ENCODE measurements at regions of chr5 and their contacts with region 1.

Region 1: GRCh38 chr5:73454351-73455036 is 5.9 kb upstream of the FOXD1 start:
- DNase-seq: peak; percentile 52
- H3K4me3 ChIP-seq: peak overlapping the region in 1 of 2 experiments; percentile 22; a peak in 1 of 4 replicates
- H3K27ac ChIP-seq: no peak overlapping the region
- H3K4me1 ChIP-seq: peaks cover 5 to 7% of the 10 kb centered on the region in 2 experiments; a peak in 1 of 4 replicates
- H3K27me3 ChIP-seq: no peaks in the 10 kb centered on the region
- CTCF ChIP-seq: peak; percentile 81
- EP300 ChIP-seq: no peak
- RAD21 ChIP-seq: peak; percentile 49

Region 2: GRCh38 chr5:73303148-73304079 is 151.1 kb before region 1 on chr5:
- CTCF ChIA-PET with region 1: interaction called, 12 read pairs
- POLR2A ChIA-PET with region 1: no interaction called
- DNase-seq: peak; percentile 49
- H3K4me3 ChIP-seq: no peak overlapping the region
- H3K27ac ChIP-seq: no peak overlapping the region
- H3K4me1 ChIP-seq: no peaks in the 10 kb centered on the region; a peak in 1 of 4 replicates
- H3K27me3 ChIP-seq: no peaks in the 10 kb centered on the region
- CTCF ChIP-seq: peak; percentile 18; the same call in 1 of the 2 replicates
- EP300 ChIP-seq: no peak
- RAD21 ChIP-seq: no peak

Region 3: DNA sequence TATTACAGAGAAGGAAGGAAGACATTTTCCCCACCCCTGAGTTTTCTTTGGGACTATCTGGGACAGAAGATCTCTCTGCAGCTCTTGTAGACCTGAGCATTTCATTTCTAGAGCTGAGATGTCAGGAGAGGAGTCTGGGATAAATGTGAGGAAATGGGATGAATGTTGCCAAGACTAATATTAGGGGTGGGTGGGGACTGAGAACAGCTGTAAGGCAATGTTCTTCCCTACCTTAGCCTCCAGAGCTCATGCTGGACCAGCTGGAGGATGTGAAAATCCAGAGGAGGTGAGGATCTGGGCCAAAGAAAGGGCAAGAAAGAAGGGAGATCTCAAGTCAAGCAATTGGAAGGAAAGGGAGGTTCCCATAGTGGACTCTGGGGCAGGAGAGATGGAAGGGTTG is 17.2 kb after region 1 on chr5:
- CTCF ChIA-PET with region 1: interaction called, 10 read pairs
- POLR2A ChIA-PET with region 1: no interaction called
- DNase-seq: no peak
- H3K4me3 ChIP-seq: no peak overlapping the region
- H3K27ac ChIP-seq: no peak overlapping the region
- H3K4me1 ChIP-seq: no peaks in the 10 kb centered on the region
- H3K27me3 ChIP-seq: no peaks in the 10 kb centered on the region
- CTCF ChIP-seq: no peak
- EP300 ChIP-seq: no peak
- RAD21 ChIP-seq: no peak

Region 4: GRCh38 chr5:73498057-73499008 is 43.8 kb after region 1 on chr5 and contains the start of gene BTF3:
- CTCF ChIA-PET with region 1: interaction called, 13 read pairs
- POLR2A ChIA-PET with region 1: interaction called, 3 read pairs
- DNase-seq: peak; percentile 91
- H3K4me3 ChIP-seq: peak within 1 kb of the TSS; percentile 88 to 98
- H3K27ac ChIP-seq: peak within 1 kb of the TSS; percentile 95 to 99
- H3K4me1 ChIP-seq: peaks cover 11 to 16% of the 10 kb centered on the region in 2 experiments; a peak in 3 of 4 replicates
- H3K27me3 ChIP-seq: no peaks in the 10 kb centered on the region
- CTCF ChIP-seq: no peak
- EP300 ChIP-seq: no peak
- RAD21 ChIP-seq: no peak
- polyA plus RNA-seq, gene BTF3: 458 and 492 TPM in 2 replicates

Region 5: GRCh38 chr5:73540192-73540591 is 85.7 kb after region 1 on chr5:
- CTCF ChIA-PET with region 1: interaction called, 10 read pairs
- POLR2A ChIA-PET with region 1: no interaction called
- DNase-seq: no peak
- H3K4me3 ChIP-seq: no peak overlapping the region
- H3K27ac ChIP-seq: no peak overlapping the region
- H3K4me1 ChIP-seq: no peaks in the 10 kb centered on the region
- H3K27me3 ChIP-seq: no peaks in the 10 kb centered on the region
- CTCF ChIP-seq: no peak
- EP300 ChIP-seq: no peak
- RAD21 ChIP-seq: no peak